ENCODE measurements at regions of chr5 and their contacts with region 1.

Region 1: DNA sequence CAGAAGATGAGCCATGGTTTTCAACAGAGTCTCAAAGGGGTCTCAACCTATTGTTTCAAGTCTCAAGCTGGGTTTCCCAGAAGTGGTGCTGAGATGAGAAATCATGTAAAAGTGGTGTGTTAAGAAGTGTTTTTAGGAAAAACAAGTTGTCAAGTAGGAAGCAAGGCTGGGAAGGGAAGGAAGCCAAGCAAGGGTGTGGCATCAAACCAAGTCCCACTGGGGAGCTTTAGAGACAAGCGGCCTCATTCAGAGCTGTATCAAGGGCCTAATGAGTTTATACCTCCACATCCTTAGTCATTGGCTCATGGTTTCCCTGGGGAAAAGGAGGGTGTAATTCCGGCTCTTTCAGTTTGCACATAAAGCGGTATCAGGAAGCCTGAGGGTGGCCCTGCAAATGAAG is 26.4 kb upstream of the GABRB2 start:
- DNase-seq: no peak
- CTCF ChIP-seq: no peak

Region 2: GRCh38 chr5:160508780-160509361 is 1064.0 kb before region 1 on chr5:
- in situ Hi-C with region 1: loop called (anchors 25 kb)
- DNase-seq: peak; percentile 77
- CTCF ChIP-seq: peak; percentile 70

Region 3: GRCh38 chr5:161432798-161433197 is 140.1 kb before region 1 on chr5:
- in situ Hi-C with region 1: no loop called
- DNase-seq: no peak
- CTCF ChIP-seq: no peak

Region 4: DNA sequence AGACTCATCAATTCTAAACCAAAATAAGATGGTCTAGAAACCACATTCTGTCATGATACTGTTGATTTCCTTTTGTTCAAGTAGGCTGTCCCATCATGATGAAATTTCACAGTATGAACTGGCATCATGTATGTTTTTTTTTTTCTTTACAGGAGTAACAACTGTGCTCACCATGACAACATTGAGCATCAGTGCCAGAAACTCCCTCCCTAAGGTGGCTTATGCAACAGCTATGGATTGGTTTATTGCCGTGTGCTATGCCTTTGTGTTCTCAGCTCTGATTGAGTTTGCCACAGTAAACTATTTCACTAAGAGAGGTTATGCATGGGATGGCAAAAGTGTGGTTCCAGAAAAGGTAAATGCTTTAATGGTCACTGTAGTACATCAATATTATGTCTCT is 322.6 kb after region 1 on chr5:
- in situ Hi-C with region 1: no loop called
- DNase-seq: no peak
- CTCF ChIP-seq: no peak

Measured in GM13976 (cell line).